Activated CD8-positive, alpha-beta T cell treated with anti-CD3 and anti-CD28 coated beads for 36 hours (primary cell): ENCODE measurements at regions of chr1 and their contacts with region 1.

Region 1: GRCh38 chr1:209827384-209828262 is at the start of gene UTP25:
- DNase-seq: peak; percentile 98
- ATAC-seq: peak; percentile 93
- H3K4me3 Mint-ChIP-seq: peak within 1 kb of the TSS; percentile 76
- H3K27ac Mint-ChIP-seq: peak within 1 kb of the TSS; percentile 89
- H3K4me1 Mint-ChIP-seq: peaks cover 47% of the 10 kb centered on the region
- H3K27me3 Mint-ChIP-seq: peaks cover 4% of the 10 kb centered on the region
- CTCF ChIP-seq: peak; percentile 20
- total RNA-seq, gene UTP25: 8.9 to 9.5 TPM

Region 2: DNA sequence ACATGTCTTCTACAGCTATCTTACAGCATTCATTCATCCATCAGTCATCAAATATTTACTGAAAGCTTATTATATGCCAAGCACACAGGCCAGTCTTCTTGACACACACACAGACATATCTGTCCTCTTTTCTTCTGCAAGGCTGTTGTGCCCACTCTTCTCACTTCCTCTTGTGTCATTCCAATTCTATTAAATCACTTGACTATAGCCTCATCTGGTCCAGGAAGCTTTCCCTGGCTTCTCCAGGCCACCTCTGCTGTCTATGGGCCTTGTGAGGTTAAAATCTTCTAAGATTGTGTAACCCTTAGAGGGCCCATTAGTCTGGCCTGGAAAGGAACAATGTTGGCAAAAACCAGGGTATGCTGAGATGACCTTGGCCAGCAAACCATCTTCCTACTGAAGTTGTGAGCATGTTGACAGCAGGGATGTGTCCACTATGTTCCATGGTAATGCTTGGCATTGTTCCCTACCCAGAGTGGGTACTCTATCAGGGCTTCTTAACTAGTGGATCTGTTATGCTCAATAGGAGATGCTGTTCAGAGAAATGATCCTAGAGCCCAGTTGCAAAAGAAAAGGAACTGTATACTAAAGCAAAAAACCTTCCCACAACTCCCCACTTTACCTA is 66.5 kb before region 1 on chr1:
- CTCF ChIA-PET with region 1: interaction called, 13 read pairs
- POLR2A ChIA-PET with region 1: interaction called, 3 read pairs
- intact Hi-C with region 1: loop called (anchors 5 kb)
- DNase-seq: no peak
- ATAC-seq: no peak
- H3K4me3 Mint-ChIP-seq: peak overlapping the region; percentile 8
- H3K27ac Mint-ChIP-seq: peak overlapping the region; percentile 83
- H3K4me1 Mint-ChIP-seq: peaks cover 70% of the 10 kb centered on the region
- H3K27me3 Mint-ChIP-seq: no peaks in the 10 kb centered on the region
- CTCF ChIP-seq: no peak

Region 3: GRCh38 chr1:209774592-209774991 is 53.0 kb before region 1 on chr1:
- CTCF ChIA-PET with region 1: interaction called, 27 read pairs
- POLR2A ChIA-PET with region 1: interaction called, 18 read pairs
- intact Hi-C with region 1: loop called (anchors 5 kb)
- DNase-seq: no peak
- ATAC-seq: no peak
- H3K4me3 Mint-ChIP-seq: no peak overlapping the region
- H3K27ac Mint-ChIP-seq: peak overlapping the region; percentile 80
- H3K4me1 Mint-ChIP-seq: peaks cover 44% of the 10 kb centered on the region
- H3K27me3 Mint-ChIP-seq: no peaks in the 10 kb centered on the region
- CTCF ChIP-seq: no peak

Region 4: DNA sequence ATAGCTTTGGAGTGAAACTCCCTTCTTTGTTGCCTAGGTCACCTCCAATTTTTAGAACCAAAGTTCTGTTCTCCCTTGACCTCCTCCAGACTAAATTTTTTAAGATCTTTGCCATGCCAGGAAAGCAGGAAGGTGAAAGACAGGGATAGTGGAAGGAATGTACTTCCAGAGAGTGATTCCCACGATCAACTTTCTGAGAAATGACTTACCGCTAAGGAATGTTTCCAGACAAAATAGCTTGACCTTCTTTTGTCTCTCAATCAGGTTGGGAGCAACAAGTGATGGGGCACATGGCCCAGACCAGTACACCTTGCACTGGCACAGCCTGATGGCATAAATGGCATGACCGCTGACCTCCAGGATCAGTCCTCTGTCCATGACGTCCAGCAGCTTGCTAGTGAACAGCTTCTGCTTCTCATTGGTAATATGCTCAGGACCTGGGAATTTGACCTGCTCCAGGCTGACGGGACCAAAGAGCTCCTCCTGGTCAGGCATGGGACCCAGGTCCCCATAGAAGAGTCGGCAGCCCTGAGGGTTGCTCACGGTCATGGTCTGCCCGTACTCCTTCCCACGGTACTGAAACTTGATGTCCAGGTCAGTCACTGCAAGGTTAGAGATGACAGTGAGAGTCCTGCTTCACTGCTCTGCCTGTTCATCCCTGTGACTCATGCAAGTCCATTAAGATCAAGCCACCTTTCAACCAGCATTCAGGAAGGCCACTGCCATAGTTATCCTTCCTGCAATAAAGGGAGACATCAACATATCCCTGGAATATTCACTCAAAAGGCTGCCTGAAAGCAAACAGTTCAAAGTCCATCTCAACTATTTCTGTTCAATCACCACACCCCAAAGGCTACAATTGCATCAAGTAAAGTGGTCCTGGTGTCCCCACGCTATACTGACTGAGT is 37.1 kb before region 1 on chr1:
- CTCF ChIA-PET with region 1: interaction called, 45 read pairs
- POLR2A ChIA-PET with region 1: no interaction called
- intact Hi-C with region 1: no loop called
- DNase-seq: no peak
- ATAC-seq: no peak
- H3K4me3 Mint-ChIP-seq: no peak overlapping the region
- H3K27ac Mint-ChIP-seq: no peak overlapping the region
- H3K4me1 Mint-ChIP-seq: peaks cover 3% of the 10 kb centered on the region
- H3K27me3 Mint-ChIP-seq: peaks cover 6% of the 10 kb centered on the region
- CTCF ChIP-seq: no peak

Region 5: GRCh38 chr1:209815931-209816341 is 11.7 kb before region 1 on chr1:
- CTCF ChIA-PET with region 1: interaction called, 59 read pairs
- POLR2A ChIA-PET with region 1: interaction called, 7 read pairs
- intact Hi-C with region 1: no loop called
- DNase-seq: no peak
- ATAC-seq: peak; percentile 20
- H3K4me3 Mint-ChIP-seq: no peak overlapping the region
- H3K27ac Mint-ChIP-seq: no peak overlapping the region
- H3K4me1 Mint-ChIP-seq: peaks cover 12% of the 10 kb centered on the region
- H3K27me3 Mint-ChIP-seq: peaks cover 10% of the 10 kb centered on the region
- CTCF ChIP-seq: no peak